Activated CD4-positive, alpha-beta T cell treated with anti-CD3 and anti-CD28 coated beads for 36 hours (primary cell): ENCODE measurements at regions of chr13 and their contacts with region 1.

Region 1: GRCh38 chr13:27953676-27954405 is 15.3 kb downstream of the CDX2 start:
- DNase-seq: peak; percentile 84
- ATAC-seq: peak; percentile 94
- H3K4me3 Mint-ChIP-seq: peak overlapping the region; percentile 62
- H3K27ac Mint-ChIP-seq: peak overlapping the region; percentile 19
- H3K4me1 Mint-ChIP-seq: peaks cover 15% of the 10 kb centered on the region
- H3K27me3 Mint-ChIP-seq: peaks cover 57% of the 10 kb centered on the region

Region 2: DNA sequence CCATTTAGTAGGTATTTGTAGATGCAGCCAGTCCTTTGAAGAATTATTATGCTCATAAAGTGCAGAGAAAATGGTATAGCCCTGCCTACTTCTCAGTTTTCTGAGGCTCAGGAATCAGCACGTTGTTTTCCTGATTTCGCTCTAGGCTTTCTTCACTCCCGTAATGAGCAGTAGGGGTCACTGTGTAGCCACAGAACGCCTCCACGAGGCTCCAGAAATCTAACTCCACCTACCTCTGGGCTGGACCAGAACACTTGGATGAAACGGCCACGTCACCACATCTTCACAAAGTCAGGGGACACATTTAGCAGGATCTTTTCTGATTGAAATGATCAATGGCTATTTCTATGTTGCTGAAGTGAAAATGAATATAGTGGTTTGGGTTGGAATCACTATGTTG is 579.2 kb before region 1 on chr13:
- CTCF ChIA-PET with region 1: interaction called, 4 read pairs
- POLR2A ChIA-PET with region 1: no interaction called
- intact Hi-C with region 1: loop called in 1 of 2 experiments (anchors 2 kb)
- DNase-seq: peak; percentile 72
- ATAC-seq: peak; percentile 95
- H3K4me3 Mint-ChIP-seq: no peak overlapping the region
- H3K27ac Mint-ChIP-seq: no peak overlapping the region
- H3K4me1 Mint-ChIP-seq: peaks cover 3% of the 10 kb centered on the region
- H3K27me3 Mint-ChIP-seq: peaks cover 15% of the 10 kb centered on the region

Region 3: GRCh38 chr13:27868641-27869435 is 85.0 kb before region 1 on chr13:
- CTCF ChIA-PET with region 1: interaction called, 29 read pairs
- POLR2A ChIA-PET with region 1: interaction called, 4 read pairs
- intact Hi-C with region 1: loop called (anchors 1 kb)
- DNase-seq: no peak
- ATAC-seq: no peak
- H3K4me3 Mint-ChIP-seq: no peak overlapping the region
- H3K27ac Mint-ChIP-seq: no peak overlapping the region
- H3K4me1 Mint-ChIP-seq: no peaks in the 10 kb centered on the region
- H3K27me3 Mint-ChIP-seq: peaks cover 24% of the 10 kb centered on the region

Region 4: GRCh38 chr13:27919934-27920676 is 33.7 kb before region 1 on chr13 and contains the start of gene PDX1:
- CTCF ChIA-PET with region 1: interaction called, 10 read pairs
- POLR2A ChIA-PET with region 1: no interaction called
- intact Hi-C with region 1: loop called (anchors 1 to 2 kb)
- DNase-seq: no peak
- ATAC-seq: peak; percentile 28
- H3K4me3 Mint-ChIP-seq: peak within 1 kb of the TSS; percentile 67
- H3K27ac Mint-ChIP-seq: no peak within 1 kb of the TSS
- H3K4me1 Mint-ChIP-seq: peaks cover 26% of the 10 kb centered on the region
- H3K27me3 Mint-ChIP-seq: peaks cover 68% of the 10 kb centered on the region
- total RNA-seq, gene PDX1: not detected

Region 5: DNA sequence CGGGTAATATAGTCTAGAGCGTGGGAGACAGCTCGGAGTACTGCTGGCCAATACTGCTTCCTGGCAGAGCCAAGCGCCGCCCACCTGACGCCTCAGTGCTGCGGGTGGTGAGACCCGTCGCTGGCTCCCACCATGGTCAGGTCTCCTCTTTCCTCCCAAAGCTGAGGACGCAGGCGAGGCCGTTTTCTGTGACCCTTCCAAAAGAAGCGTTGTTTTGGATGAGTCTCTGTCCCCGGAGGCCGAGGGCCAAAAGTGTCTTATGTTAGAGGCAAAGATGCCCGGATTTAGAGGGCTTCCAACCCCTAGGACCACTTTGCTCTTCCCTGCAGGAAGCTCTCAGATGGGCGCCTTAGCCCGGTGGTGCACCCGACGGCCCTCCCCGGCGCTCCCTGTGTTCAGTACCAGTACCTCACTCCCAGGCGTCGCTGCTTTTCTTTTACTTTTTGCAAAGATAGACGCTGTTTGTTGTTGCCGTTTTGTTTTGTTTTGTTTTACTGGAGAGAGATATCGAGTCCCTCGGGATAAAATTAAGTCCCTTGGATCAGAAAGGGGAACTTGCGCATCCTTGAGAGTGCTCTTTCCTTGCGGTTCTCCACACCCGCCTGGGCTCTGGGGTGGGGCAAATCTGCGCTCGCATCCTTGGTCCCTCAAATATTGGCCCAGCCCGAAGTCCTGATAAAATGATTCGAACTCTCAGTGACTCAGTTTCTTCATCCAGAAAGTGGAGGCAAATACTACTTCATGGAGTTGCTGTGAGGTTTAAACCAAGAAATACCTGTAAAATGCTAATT is 27.0 kb before region 1 on chr13:
- CTCF ChIA-PET with region 1: interaction called, 26 read pairs
- POLR2A ChIA-PET with region 1: no interaction called
- intact Hi-C with region 1: loop called in 1 of 2 experiments (anchors 2 kb)
- DNase-seq: peak; percentile 33
- ATAC-seq: no peak
- H3K4me3 Mint-ChIP-seq: peak overlapping the region; percentile 7
- H3K27ac Mint-ChIP-seq: no peak overlapping the region
- H3K4me1 Mint-ChIP-seq: peaks cover 22% of the 10 kb centered on the region
- H3K27me3 Mint-ChIP-seq: peaks cover 84% of the 10 kb centered on the region

Region 6: GRCh38 chr13:27968316-27969081 is 14.7 kb after region 1 on chr13:
- CTCF ChIA-PET with region 1: interaction called, 8 read pairs
- POLR2A ChIA-PET with region 1: no interaction called
- intact Hi-C with region 1: loop called in 1 of 2 experiments (anchors 2 kb)
- DNase-seq: peak; percentile 38
- ATAC-seq: peak; percentile 12
- H3K4me3 Mint-ChIP-seq: no peak overlapping the region
- H3K27ac Mint-ChIP-seq: no peak overlapping the region
- H3K4me1 Mint-ChIP-seq: peaks cover 24% of the 10 kb centered on the region
- H3K27me3 Mint-ChIP-seq: peaks cover 73% of the 10 kb centered on the region

Region 7: GRCh38 chr13:27977476-27978300 is 23.8 kb after region 1 on chr13:
- CTCF ChIA-PET with region 1: interaction called, 18 read pairs
- POLR2A ChIA-PET with region 1: no interaction called
- intact Hi-C with region 1: no loop called
- DNase-seq: no peak
- ATAC-seq: no peak
- H3K4me3 Mint-ChIP-seq: no peak overlapping the region
- H3K27ac Mint-ChIP-seq: no peak overlapping the region
- H3K4me1 Mint-ChIP-seq: peaks cover 15% of the 10 kb centered on the region
- H3K27me3 Mint-ChIP-seq: peaks cover 79% of the 10 kb centered on the region

Region 8: GRCh38 chr13:27991881-27992550 is 38.2 kb after region 1 on chr13:
- CTCF ChIA-PET with region 1: no interaction called
- POLR2A ChIA-PET with region 1: no interaction called
- intact Hi-C with region 1: no loop called
- DNase-seq: no peak
- ATAC-seq: no peak
- H3K4me3 Mint-ChIP-seq: no peak overlapping the region
- H3K27ac Mint-ChIP-seq: no peak overlapping the region
- H3K4me1 Mint-ChIP-seq: no peaks in the 10 kb centered on the region
- H3K27me3 Mint-ChIP-seq: peaks cover 7% of the 10 kb centered on the region